ENCODE measurements at regions of chr5 and their contacts with region 1.

Region 1: GRCh38 chr5:88405783-88406182 is 137.1 kb upstream of the TMEM161B start:
- DNase-seq: no peak
- H3K4me3 ChIP-seq: no peak overlapping the region
- H3K27ac ChIP-seq: no peak overlapping the region
- H3K4me1 ChIP-seq: no peaks in the 10 kb centered on the region
- H3K27me3 ChIP-seq: no peaks in the 10 kb centered on the region
- CTCF ChIP-seq: no peak
- EP300 ChIP-seq: no peak
- POLR2A ChIP-seq: no peak

Region 2: DNA sequence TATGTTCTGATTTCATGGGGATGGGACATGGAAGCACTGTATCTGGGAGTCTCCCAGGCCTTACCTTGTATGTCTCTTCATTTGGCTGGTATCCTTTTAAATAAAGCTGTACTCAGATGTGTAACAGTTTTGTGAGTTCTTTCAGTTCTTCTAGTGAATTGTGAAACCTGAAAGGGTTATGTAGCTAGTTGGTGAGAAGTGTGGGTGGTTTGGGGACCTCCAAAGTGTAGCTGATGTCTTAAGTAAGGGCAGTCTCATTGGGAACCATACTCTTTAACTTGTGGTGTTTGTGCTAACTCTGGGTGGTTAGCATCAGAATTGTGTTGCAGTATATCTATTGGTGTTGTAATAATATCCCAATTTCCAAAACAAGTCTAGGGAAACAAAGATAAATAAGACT is 826.1 kb before region 1 on chr5:
- intact Hi-C with region 1: loop called in 1 of 4 experiments (anchors 5 kb)
- DNase-seq: no peak
- H3K4me3 ChIP-seq: no peak overlapping the region
- H3K27ac ChIP-seq: no peak overlapping the region
- H3K4me1 ChIP-seq: no peaks in the 10 kb centered on the region
- H3K27me3 ChIP-seq: no peaks in the 10 kb centered on the region
- CTCF ChIP-seq: no peak
- EP300 ChIP-seq: no peak
- POLR2A ChIP-seq: no peak

Region 3: DNA sequence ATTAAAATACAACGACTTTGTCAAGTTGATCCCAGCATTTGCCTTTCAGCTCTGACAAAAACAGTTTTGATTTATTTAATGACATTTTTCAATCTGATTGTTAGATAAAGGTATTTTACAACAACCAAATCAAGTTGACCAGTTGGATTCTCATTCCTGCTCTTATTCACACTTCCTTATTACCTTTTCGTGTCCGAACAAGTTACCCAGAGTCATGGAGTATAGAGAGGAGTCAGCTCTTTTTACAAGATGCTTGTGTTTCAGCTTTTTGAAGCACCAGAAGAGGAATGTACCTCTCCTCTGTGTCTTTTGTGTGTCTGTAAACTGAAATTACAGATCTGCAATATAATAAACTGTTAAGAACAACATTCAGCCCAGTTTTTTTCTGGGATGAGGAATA is 14.1 kb after region 1 on chr5:
- intact Hi-C with region 1: no loop called
- DNase-seq: no peak
- H3K4me3 ChIP-seq: no peak overlapping the region
- H3K27ac ChIP-seq: no peak overlapping the region
- H3K4me1 ChIP-seq: no peaks in the 10 kb centered on the region
- H3K27me3 ChIP-seq: no peaks in the 10 kb centered on the region
- CTCF ChIP-seq: no peak
- EP300 ChIP-seq: no peak
- POLR2A ChIP-seq: no peak

Region 4: GRCh38 chr5:89313804-89314588 is 908.2 kb after region 1 on chr5:
- intact Hi-C with region 1: no loop called
- DNase-seq: no peak
- H3K4me3 ChIP-seq: no peak overlapping the region
- H3K27ac ChIP-seq: no peak overlapping the region
- H3K4me1 ChIP-seq: peaks cover 3% of the 10 kb centered on the region
- H3K27me3 ChIP-seq: no peaks in the 10 kb centered on the region
- CTCF ChIP-seq: no peak
- EP300 ChIP-seq: no peak
- POLR2A ChIP-seq: no peak

Measured in ovary (tissue), 10 donors.